Activated CD8-positive, alpha-beta memory T cell treated with anti-CD3 and anti-CD28 coated beads, Interleukin-2, amount 10 ng/mL, durations not matched to agents 7 days and 5 days (primary cell): ENCODE measurements at regions of chr7 and their contacts with region 1.

Region 1: GRCh38 chr7:1044191-1045068 is at the start of gene GPR146:
- DNase-seq: peak; percentile 93
- ATAC-seq: peak; percentile 93
- H3K4me3 Mint-ChIP-seq: peak within 1 kb of the TSS; percentile 77
- H3K27ac Mint-ChIP-seq: peak within 1 kb of the TSS; percentile 82
- H3K4me1 Mint-ChIP-seq: peaks cover 67% of the 10 kb centered on the region
- H3K27me3 Mint-ChIP-seq: no peaks in the 10 kb centered on the region
- total RNA-seq, gene GPR146: 0.40 to 2.1 TPM

Region 2: DNA sequence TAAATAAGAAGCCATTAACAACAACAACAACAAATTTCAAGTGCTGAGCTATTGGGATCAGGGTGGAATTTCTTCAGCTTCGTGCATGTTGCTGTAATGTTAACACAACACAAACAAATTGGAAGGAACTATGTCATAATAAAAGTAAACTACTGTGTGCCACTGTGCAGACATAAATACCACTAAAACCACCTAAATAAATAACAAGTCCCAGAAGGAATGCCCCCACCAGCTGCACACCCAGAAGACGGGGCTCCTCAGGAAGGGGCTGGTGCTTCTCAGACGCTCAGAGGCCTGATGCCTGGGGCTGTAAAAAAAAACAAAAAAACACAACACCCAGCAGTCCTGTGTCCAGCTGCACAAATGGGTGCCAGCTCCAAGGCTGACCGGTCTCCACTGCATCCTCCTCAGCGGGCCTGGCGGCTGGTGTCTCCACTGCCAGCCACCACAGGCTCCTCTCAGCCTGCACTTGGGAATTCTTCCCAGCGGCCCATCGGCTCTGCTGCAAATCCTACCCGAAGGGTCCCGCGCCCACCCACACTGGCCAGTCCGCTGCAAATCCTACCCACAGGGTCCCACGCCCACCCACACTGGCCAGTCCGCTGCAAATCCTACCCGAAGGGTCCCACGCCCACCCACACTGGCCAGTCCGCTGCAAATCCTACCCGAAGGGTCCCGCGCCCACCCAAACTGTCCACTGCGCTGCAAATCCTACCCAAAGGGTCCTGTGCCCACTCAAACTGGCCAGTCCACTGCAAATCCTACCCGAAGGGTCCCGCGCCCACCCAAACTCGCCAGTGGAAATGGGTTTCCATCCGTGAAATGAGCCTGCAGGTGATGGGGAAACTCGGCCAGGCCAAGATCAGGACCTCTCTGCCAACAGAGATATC is 353.7 kb before region 1 on chr7:
- CTCF ChIA-PET with region 1: no interaction called
- DNase-seq: no peak
- ATAC-seq: no peak
- H3K4me3 Mint-ChIP-seq: no peak overlapping the region
- H3K27ac Mint-ChIP-seq: no peak overlapping the region
- H3K4me1 Mint-ChIP-seq: no peaks in the 10 kb centered on the region
- H3K27me3 Mint-ChIP-seq: no peaks in the 10 kb centered on the region

Region 3: DNA sequence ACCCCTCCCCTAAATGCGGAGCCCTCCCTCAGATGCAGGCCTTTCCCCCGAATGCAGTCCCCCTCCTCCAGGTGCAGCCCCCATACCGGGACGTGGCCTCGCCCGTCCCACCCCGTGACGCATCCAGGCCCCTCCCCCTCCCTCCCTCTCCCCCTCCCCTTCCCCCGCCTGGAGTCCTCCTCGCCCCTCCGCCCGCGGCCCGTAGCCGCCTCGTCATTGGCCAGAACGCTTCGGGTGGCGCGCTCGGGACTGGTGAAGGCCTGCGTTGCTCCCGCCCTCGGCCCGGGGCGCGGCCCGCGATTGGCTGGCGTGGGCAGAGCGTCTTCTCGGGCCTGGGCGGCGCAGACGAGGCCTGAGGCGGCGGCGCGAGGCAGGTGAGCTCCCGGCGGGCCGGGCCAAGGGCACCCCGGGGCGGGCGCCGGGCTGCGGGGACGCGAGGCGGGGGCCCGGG is 228.1 kb before region 1 on chr7:
- CTCF ChIA-PET with region 1: no interaction called
- DNase-seq: peak; percentile 97
- ATAC-seq: peak; percentile 99
- H3K4me3 Mint-ChIP-seq: peak overlapping the region; percentile 39
- H3K27ac Mint-ChIP-seq: no peak overlapping the region
- H3K4me1 Mint-ChIP-seq: peaks cover 47% of the 10 kb centered on the region
- H3K27me3 Mint-ChIP-seq: peaks cover 43% of the 10 kb centered on the region

Region 4: DNA sequence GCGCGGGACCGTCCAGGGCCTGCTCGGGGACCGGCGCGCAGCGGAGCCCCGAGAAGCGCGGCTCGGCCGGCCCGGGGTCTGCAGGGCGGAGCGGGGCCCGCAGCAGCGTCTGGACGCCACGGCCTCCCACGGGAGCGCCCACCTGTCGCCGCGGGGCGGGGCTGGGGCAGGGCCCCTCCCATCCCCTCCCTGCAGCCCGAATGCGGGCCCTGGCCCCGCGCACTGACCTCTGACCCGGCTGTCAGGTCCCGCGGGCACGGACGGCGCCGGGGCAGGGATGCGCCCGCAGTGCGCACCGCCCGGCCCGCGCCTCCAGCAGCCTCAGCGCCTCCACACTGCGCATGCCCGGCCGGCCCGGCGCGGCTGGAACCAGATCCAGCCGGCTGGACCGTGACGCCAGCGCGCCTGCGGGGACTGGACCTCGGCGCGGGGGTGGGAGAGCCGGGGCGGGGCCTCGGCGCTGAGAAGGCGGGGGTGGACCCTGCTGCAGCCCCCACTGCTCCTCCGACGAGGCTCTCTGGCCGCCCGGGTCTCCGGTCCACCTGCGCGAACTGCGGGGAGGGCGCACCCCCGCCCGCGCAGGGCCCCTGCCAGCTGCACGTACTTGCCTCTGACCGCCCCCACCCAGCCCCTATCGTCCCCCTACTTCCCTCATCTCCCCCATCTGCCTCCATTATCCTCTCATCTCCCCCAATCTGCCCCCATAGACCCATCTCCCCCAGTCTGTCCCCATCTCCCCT is 16.2 kb before region 1 on chr7:
- CTCF ChIA-PET with region 1: interaction called, 11 read pairs
- DNase-seq: peak; percentile 91
- ATAC-seq: peak; percentile 92
- H3K4me3 Mint-ChIP-seq: peak overlapping the region; percentile 64
- H3K27ac Mint-ChIP-seq: peak overlapping the region; percentile 79
- H3K4me1 Mint-ChIP-seq: peaks cover 26% of the 10 kb centered on the region
- H3K27me3 Mint-ChIP-seq: no peaks in the 10 kb centered on the region